ENCODE measurements at regions of chr17 and their contacts with region 1.

Region 1: GRCh38 chr17:2571523-2572303 is 21.7 kb upstream of the PAFAH1B1 start:
- DNase-seq: no peak
- ATAC-seq: no peak
- H3K4me3 ChIP-seq: no peak overlapping the region
- H3K27ac ChIP-seq: no peak overlapping the region
- H3K4me1 ChIP-seq: no peaks in the 10 kb centered on the region
- H3K27me3 ChIP-seq: 0 out of 2 replicates have a peak, but pooled peaks cover 2% of the 10 kb centered on the region
- CTCF ChIP-seq: no peak
- POLR2A ChIP-seq: no peak
- RAD21 ChIP-seq: no peak

Region 2: GRCh38 chr17:2521257-2521656 is 50.5 kb before region 1 on chr17:
- CTCF ChIA-PET with region 1: interaction called, 4 read pairs
- POLR2A ChIA-PET with region 1: no interaction called
- dilution Hi-C with region 1: no loop called
- in situ Hi-C with region 1: no loop called
- intact Hi-C with region 1: loop called (anchors 5 kb)
- DNase-seq: no peak
- ATAC-seq: no peak
- H3K4me3 ChIP-seq: no peak overlapping the region
- H3K27ac ChIP-seq: no peak overlapping the region
- H3K4me1 ChIP-seq: no peaks in the 10 kb centered on the region
- H3K27me3 ChIP-seq: no peaks in the 10 kb centered on the region
- CTCF ChIP-seq: no peak
- POLR2A ChIP-seq: no peak
- RAD21 ChIP-seq: no peak

Region 3: GRCh38 chr17:2532146-2532720 is 39.5 kb before region 1 on chr17:
- CTCF ChIA-PET with region 1: no interaction called
- POLR2A ChIA-PET with region 1: no interaction called
- dilution Hi-C with region 1: no loop called
- in situ Hi-C with region 1: no loop called
- intact Hi-C with region 1: no loop called
- DNase-seq: no peak
- ATAC-seq: no peak
- H3K4me3 ChIP-seq: no peak overlapping the region
- H3K27ac ChIP-seq: no peak overlapping the region
- H3K4me1 ChIP-seq: no peaks in the 10 kb centered on the region
- H3K27me3 ChIP-seq: peaks cover 2% of the 10 kb centered on the region; the same call in 1 of the 2 replicates
- CTCF ChIP-seq: no peak
- POLR2A ChIP-seq: no peak
- RAD21 ChIP-seq: no peak

Measured in IMR-90 (cell line).